ENCODE measurements at regions of chr6 and their contacts with region 1.

Region 1: GRCh38 chr6:34036357-34037069 is 109.4 kb downstream of the GRM4 start:
- DNase-seq: no peak
- H3K4me3 ChIP-seq: no peak overlapping the region
- H3K27ac ChIP-seq: no peak overlapping the region
- H3K4me1 ChIP-seq: no peaks in the 10 kb centered on the region
- H3K27me3 ChIP-seq: no peaks in the 10 kb centered on the region
- CTCF ChIP-seq: no peak
- POLR2A ChIP-seq: no peak

Region 2: GRCh38 chr6:34015586-34015985 is 20.9 kb before region 1 on chr6:
- CTCF ChIA-PET with region 1: no interaction called
- POLR2A ChIA-PET with region 1: no interaction called
- dilution Hi-C with region 1: no loop called
- intact Hi-C with region 1: no loop called
- DNase-seq: no peak
- H3K4me3 ChIP-seq: no peak overlapping the region
- H3K27ac ChIP-seq: no peak overlapping the region
- H3K4me1 ChIP-seq: no peaks in the 10 kb centered on the region
- H3K27me3 ChIP-seq: no peaks in the 10 kb centered on the region
- CTCF ChIP-seq: no peak
- POLR2A ChIP-seq: no peak

Region 3: GRCh38 chr6:34047913-34048867 is 11.7 kb after region 1 on chr6:
- CTCF ChIA-PET with region 1: no interaction called
- POLR2A ChIA-PET with region 1: interaction called, 10 read pairs
- dilution Hi-C with region 1: no loop called
- intact Hi-C with region 1: no loop called
- DNase-seq: no peak
- H3K4me3 ChIP-seq: no peak overlapping the region
- H3K27ac ChIP-seq: no peak overlapping the region
- H3K4me1 ChIP-seq: no peaks in the 10 kb centered on the region
- H3K27me3 ChIP-seq: peaks cover 0 to 3% of the 10 kb centered on the region in 2 experiments
- CTCF ChIP-seq: no peak
- POLR2A ChIP-seq: no peak

Region 4: DNA sequence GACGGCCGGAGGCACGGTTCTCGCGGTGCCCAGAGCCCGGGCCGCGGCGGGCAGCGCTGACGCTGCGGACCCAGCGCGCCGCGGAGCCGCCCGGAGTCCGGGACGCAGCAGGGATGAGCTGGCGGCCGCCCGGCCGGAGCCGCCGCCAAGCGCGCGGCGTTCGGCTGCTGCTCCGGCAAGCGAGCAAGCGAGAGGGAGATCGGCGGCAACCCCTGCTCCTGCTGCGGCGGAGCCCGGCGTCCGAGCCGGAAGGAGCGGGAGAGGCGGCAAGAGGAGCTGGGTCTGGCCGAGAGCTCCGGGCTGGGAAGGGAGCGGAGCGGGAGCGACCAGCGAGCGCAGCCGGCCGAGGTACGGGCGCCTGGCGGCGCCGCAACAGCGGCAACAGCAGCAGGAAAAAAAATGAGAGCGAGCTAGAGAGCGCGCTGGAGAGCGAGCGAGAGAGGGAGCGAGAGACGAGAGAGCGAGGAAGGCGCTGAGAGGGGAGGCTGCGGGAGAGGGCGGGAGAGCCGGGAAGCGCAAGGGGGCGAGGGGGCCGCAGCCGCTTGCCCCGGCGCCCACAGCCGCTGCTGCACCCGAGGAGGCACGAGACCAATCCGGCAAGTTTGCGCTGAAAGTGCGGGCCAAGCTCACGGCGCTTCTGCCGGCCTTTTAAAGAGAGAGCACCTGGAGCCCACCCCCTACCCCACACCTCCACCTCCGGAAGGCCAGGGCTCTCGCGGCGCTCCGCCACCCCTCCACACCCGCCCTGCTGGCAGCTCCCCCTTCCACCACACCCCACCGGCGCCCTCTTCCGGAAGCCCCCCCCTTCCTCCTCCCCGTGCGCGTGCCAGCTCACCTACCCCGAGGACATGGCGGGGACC is 108.9 kb after region 1 on chr6:
- CTCF ChIA-PET with region 1: no interaction called
- POLR2A ChIA-PET with region 1: no interaction called
- dilution Hi-C with region 1: no loop called
- intact Hi-C with region 1: loop called (anchors 5 kb)
- DNase-seq: peak; percentile 25
- H3K4me3 ChIP-seq: peak overlapping the region in 1 of 3 experiments; percentile 13
- H3K27ac ChIP-seq: no peak overlapping the region
- H3K4me1 ChIP-seq: no peaks in the 10 kb centered on the region
- H3K27me3 ChIP-seq: peaks cover 62 to 63% of the 10 kb centered on the region in 2 experiments
- CTCF ChIP-seq: no peak
- POLR2A ChIP-seq: no peak